ENCODE measurements at regions of chr16 and their contacts with region 1.

Region 1: DNA sequence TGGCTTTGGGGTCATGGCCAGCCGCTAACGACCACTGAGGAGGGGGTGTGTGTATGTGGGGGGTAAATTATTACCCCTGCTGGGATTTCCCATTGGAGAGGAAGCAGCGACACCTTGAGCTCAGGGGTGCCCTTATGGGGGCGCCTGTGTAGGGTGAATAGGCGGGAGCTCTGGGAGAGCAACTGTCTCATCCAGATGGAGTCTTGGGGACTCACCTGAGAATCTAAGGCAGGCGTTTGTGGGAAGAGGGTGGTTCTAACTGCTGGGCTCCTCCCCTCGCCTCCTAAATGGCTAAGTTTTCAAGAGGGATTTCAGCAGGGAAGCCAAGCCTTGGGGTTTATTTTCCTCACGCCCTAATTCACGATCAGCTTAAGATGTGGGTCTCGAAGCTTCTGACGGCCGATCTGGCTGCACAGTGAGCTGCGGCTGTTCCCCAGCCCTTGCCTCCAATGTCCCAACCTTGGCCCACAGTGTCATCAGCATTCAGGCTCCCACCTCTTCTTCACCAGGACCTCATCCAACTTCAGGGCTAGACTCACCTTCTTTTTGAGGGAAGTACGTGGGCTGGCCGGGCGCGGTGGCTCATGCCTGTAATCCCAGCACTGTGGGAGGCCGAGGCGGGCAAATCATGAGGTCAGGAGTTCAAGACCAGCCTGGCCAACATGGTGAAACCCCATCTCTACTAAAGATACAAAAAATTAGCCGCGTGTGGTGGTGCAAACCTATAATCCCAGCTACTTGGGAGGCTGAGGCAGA is 136.9 kb upstream of the EEF2KMT start:
- DNase-seq: peak in 1 of 10 donors; percentile 22

Region 2: DNA sequence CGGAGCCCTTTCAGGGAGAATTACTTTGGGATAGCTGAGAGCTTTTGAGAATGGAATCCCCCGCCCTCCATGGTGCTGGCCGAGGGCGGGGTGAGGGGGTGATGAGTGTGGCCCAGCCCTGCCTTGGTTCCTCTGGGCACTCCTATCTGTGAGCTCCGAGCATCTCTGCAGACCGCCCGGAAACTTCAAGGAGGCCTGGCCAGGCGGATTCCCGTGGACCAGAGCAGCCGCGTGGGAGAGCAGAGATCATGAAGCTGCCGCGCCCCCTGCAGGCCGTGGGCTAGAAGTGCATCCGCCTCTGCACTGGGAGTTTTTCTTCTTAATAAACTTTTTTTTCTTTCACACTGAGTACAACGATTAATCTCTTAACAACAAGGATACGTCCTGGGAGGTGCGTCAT is 256.0 kb after region 1 on chr16:
- intact Hi-C with region 1: loop called (anchors 2 kb)
- DNase-seq: peak; percentile 49 to 96 (median 74)